Activated CD4-positive, alpha-beta T cell treated with anti-CD3 and anti-CD28 coated beads, Interleukin-2, amount 10 ng/mL, durations not matched to agents 7 days and 5 days (primary cell): ENCODE measurements at regions of chr7 and their contacts with region 1.

Region 1: DNA sequence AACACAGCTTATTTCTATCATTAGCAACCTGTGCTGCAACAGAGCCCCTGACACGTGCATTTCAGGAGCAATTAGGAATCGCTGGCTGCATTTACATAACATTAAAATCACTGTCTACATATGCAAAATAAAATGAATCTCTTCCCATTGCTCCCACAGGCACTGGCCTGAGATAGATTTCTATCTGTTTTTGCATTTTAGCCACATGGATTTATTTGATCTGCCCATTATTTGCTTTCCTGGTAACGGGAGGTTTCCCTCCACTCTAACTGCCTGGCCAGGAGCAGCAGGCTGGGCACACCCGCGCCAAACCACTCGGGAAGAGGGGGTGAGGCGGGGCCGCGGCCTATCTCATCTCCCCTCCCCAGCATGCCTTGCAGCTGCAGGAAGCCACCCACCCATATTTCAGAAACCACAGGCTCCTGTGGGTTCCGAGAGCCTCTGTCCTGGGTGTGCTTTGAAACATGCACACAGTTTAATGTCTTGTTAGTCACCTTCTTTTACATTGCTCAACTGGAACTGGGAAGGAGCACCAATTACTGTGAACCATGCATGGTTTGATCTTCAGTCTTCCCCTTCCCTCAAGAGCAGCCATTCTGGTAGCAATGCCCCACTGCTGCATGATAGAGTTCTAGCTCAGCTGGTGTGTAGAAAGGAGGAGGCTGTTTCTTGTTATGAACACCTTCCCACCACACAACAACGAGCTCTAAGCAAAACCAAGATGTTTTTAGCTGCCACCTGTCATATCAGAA is 37.7 kb upstream of the IKZF1 start:
- DNase-seq: peak; percentile 88
- H3K4me3 Mint-ChIP-seq: peak overlapping the region; percentile 52
- H3K27ac Mint-ChIP-seq: peak overlapping the region; percentile 98
- H3K4me1 Mint-ChIP-seq: peaks cover 93% of the 10 kb centered on the region
- H3K27me3 Mint-ChIP-seq: no peaks in the 10 kb centered on the region

Region 2: GRCh38 chr7:50251765-50252164 is 15.0 kb before region 1 on chr7:
- CTCF ChIA-PET with region 1: interaction called, 13 read pairs
- POLR2A ChIA-PET with region 1: no interaction called
- DNase-seq: no peak
- H3K4me3 Mint-ChIP-seq: no peak overlapping the region
- H3K27ac Mint-ChIP-seq: no peak overlapping the region
- H3K4me1 Mint-ChIP-seq: peaks cover 7% of the 10 kb centered on the region
- H3K27me3 Mint-ChIP-seq: no peaks in the 10 kb centered on the region

Region 3: DNA sequence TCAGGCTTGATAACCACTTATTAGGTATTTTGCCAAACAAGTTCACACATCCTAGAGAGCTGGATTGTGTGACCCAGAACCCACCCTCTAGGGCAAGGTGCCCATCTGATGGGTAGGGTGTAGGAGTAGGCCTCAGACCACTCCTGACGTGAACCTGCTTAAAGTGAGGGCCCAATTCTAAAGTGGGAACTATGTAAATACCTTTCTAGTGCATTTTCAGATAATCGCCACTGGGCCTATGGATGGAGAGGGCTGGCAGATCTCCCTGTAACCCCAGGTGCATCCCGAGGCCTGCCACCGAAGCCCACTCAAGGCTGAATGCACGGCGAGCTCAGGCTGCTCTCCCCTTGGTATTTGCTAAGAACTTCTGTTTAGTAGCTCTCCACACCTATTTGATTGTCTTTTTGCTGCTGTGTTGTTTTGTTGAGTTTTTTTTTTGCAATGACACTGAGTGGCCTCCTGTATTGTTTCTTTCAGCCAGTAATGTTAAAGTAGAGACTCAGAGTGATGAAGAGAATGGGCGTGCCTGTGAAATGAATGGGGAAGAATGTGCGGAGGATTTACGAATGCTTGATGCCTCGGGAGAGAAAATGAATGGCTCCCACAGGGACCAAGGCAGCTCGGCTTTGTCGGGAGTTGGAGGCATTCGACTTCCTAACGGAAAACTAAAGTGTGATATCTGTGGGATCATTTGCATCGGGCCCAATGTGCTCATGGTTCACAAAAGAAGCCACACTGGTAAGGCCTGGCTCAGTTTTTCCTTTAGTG is 109.4 kb after region 1 on chr7:
- CTCF ChIA-PET with region 1: no interaction called
- POLR2A ChIA-PET with region 1: no interaction called
- DNase-seq: peak; percentile 5
- H3K4me3 Mint-ChIP-seq: no peak overlapping the region
- H3K27ac Mint-ChIP-seq: peak overlapping the region; percentile 71
- H3K4me1 Mint-ChIP-seq: peaks cover 90% of the 10 kb centered on the region
- H3K27me3 Mint-ChIP-seq: no peaks in the 10 kb centered on the region

Region 4: GRCh38 chr7:50389961-50390360 is 123.2 kb after region 1 on chr7:
- CTCF ChIA-PET with region 1: no interaction called
- POLR2A ChIA-PET with region 1: no interaction called
- DNase-seq: no peak
- H3K4me3 Mint-ChIP-seq: no peak overlapping the region
- H3K27ac Mint-ChIP-seq: peak overlapping the region; percentile 73
- H3K4me1 Mint-ChIP-seq: peaks cover 81% of the 10 kb centered on the region
- H3K27me3 Mint-ChIP-seq: no peaks in the 10 kb centered on the region

Region 5: GRCh38 chr7:51666751-51667150 is 1399.9 kb after region 1 on chr7:
- CTCF ChIA-PET with region 1: no interaction called
- POLR2A ChIA-PET with region 1: no interaction called
- DNase-seq: no peak
- H3K4me3 Mint-ChIP-seq: no peak overlapping the region
- H3K27ac Mint-ChIP-seq: no peak overlapping the region
- H3K4me1 Mint-ChIP-seq: no peaks in the 10 kb centered on the region
- H3K27me3 Mint-ChIP-seq: no peaks in the 10 kb centered on the region